ENCODE measurements at regions of chrX and their contacts with region 1.

Region 1: DNA sequence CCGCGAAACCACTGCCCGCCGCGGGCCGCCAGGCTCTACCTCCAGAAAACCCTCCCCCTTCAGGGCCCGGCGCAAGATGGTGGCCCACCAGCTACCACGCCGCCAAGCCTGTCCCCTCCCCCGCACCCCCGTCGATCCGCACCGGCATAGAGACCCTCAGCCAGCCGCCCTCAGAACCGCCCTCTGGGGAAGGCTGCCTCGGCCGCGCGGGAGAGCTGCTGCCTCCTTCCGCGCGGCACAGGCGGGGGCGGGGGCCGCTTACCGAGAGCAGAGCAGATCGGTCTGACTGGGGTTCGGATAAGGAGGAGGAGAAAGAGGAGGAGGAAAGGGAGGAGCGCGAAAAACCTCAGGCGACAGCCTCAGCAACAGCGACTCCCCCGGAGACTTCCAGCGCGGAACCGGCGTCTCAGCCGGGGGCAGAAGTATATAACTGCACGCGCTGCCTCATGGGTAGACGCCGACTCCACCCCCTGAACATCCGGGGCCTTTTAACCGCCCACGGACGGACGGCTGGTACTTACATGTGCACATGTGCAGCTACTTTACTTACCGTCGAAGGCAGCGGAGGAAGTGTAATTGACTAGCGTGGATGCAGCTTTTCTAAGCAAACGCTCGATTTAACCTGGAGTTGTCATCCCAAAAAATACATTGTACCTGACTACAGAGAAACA is at the start of gene ZNF280C:
- DNase-seq: peak; percentile 85
- H3K4me3 Mint-ChIP-seq: peak within 1 kb of the TSS; percentile 92
- H3K27ac Mint-ChIP-seq: peak within 1 kb of the TSS; percentile 91
- H3K4me1 Mint-ChIP-seq: peaks cover 19% of the 10 kb centered on the region
- H3K27me3 Mint-ChIP-seq: peaks cover 2% of the 10 kb centered on the region
- total RNA-seq, gene ZNF280C: 7.4 and 7.6 TPM in 2 replicates

Region 2: DNA sequence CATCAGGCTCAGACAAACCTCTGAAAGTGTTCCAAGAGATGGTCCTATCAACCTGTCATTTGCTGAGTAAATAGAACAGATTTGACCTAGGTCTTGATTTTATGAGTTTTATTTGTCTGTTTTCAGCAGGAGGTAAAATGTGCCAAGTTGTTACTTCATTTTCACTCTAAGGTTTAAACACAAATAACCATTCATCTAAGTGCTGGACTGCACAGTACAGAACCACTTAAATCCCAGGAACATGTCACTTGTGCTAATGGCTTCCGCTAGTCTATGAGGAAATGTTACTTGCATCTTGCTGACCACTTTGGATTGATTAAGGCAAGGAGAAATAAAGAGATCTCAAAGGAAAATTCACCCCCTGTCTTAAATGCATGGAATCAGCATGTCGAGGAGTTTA is 1406.1 kb before region 1 on chrX:
- intact Hi-C with region 1: no loop called
- DNase-seq: no peak
- H3K4me3 Mint-ChIP-seq: no peak overlapping the region
- H3K27ac Mint-ChIP-seq: no peak overlapping the region
- H3K4me1 Mint-ChIP-seq: no peaks in the 10 kb centered on the region
- H3K27me3 Mint-ChIP-seq: no peaks in the 10 kb centered on the region

Region 3: DNA sequence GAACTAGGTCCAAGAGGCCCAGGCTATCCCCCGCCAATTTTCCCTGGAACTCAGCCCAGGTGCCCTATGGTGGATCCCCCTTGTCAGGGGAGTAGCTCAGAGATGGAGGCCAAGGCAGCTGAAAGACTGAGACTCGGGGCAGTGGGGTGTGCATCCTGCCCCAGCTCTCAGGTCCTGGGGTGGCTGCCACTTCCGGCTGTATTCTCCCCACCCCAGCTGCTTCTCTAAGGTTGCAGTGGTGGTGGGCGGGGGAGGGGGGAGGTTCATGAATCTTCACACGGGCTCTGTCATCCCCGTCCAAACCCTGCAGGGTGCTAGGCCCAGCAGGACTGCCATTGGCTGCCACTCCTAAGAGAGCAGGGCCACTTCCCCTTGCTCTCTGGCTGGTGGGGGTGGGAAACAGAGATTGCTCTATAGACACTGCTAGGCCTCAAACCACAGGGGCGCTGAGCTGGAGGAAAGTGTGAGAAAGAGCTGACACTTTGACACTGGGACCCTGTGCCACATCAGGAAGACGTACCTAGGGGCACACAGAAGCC is 487.4 kb before region 1 on chrX:
- intact Hi-C with region 1: loop called (anchors 5 kb)
- DNase-seq: peak; percentile 65
- H3K4me3 Mint-ChIP-seq: peak overlapping the region; percentile 87
- H3K27ac Mint-ChIP-seq: peak overlapping the region; percentile 91
- H3K4me1 Mint-ChIP-seq: peaks cover 63% of the 10 kb centered on the region
- H3K27me3 Mint-ChIP-seq: no peaks in the 10 kb centered on the region

Region 4: GRCh38 chrX:130165703-130166502 is 102.7 kb before region 1 on chrX and contains the start of gene AIFM1:
- intact Hi-C with region 1: loop called (anchors 2 kb)
- DNase-seq: peak; percentile 86
- H3K4me3 Mint-ChIP-seq: peak within 1 kb of the TSS; percentile 95
- H3K27ac Mint-ChIP-seq: peak within 1 kb of the TSS; percentile 98
- H3K4me1 Mint-ChIP-seq: peaks cover 20% of the 10 kb centered on the region
- H3K27me3 Mint-ChIP-seq: no peaks in the 10 kb centered on the region
- total RNA-seq, gene AIFM1: 46.0 and 50.2 TPM in 2 replicates

Region 5: DNA sequence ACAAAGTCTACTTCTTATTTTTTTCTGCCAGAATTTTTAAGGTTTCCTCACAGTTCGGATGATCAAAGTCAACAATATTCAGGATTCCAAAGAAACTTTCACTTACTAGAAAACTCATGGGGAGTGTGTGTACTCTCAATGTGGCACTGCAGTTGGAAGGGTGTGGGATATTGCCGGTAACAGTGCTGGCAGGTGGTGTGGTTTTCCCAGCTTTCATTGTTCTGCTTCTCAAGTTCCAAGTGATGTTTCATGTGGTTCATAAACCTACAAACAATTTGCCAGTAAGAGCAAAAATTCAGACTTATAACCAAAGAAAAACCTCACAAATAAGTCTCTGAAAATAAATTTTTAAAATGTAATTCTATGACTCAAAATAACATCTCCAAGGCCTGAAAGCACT is 39.8 kb before region 1 on chrX:
- intact Hi-C with region 1: loop called (anchors 5 kb)
- DNase-seq: no peak
- H3K4me3 Mint-ChIP-seq: no peak overlapping the region
- H3K27ac Mint-ChIP-seq: peak overlapping the region; percentile 23
- H3K4me1 Mint-ChIP-seq: no peaks in the 10 kb centered on the region
- H3K27me3 Mint-ChIP-seq: no peaks in the 10 kb centered on the region

Region 6: GRCh38 chrX:130401415-130402207 is 133.0 kb after region 1 on chrX and contains the start of gene RBMX2:
- intact Hi-C with region 1: loop called (anchors 5 kb)
- DNase-seq: peak; percentile 64
- H3K4me3 Mint-ChIP-seq: peak within 1 kb of the TSS; percentile 100
- H3K27ac Mint-ChIP-seq: peak within 1 kb of the TSS; percentile 89
- H3K4me1 Mint-ChIP-seq: no peaks in the 10 kb centered on the region
- H3K27me3 Mint-ChIP-seq: peaks cover 6% of the 10 kb centered on the region
- total RNA-seq, gene RBMX2: 26.0 and 26.3 TPM in 2 replicates

Region 7: GRCh38 chrX:130468395-130468923 is 199.8 kb after region 1 on chrX:
- intact Hi-C with region 1: no loop called
- DNase-seq: no peak
- H3K4me3 Mint-ChIP-seq: no peak overlapping the region
- H3K27ac Mint-ChIP-seq: no peak overlapping the region
- H3K4me1 Mint-ChIP-seq: no peaks in the 10 kb centered on the region
- H3K27me3 Mint-ChIP-seq: peaks cover 2% of the 10 kb centered on the region

Region 8: DNA sequence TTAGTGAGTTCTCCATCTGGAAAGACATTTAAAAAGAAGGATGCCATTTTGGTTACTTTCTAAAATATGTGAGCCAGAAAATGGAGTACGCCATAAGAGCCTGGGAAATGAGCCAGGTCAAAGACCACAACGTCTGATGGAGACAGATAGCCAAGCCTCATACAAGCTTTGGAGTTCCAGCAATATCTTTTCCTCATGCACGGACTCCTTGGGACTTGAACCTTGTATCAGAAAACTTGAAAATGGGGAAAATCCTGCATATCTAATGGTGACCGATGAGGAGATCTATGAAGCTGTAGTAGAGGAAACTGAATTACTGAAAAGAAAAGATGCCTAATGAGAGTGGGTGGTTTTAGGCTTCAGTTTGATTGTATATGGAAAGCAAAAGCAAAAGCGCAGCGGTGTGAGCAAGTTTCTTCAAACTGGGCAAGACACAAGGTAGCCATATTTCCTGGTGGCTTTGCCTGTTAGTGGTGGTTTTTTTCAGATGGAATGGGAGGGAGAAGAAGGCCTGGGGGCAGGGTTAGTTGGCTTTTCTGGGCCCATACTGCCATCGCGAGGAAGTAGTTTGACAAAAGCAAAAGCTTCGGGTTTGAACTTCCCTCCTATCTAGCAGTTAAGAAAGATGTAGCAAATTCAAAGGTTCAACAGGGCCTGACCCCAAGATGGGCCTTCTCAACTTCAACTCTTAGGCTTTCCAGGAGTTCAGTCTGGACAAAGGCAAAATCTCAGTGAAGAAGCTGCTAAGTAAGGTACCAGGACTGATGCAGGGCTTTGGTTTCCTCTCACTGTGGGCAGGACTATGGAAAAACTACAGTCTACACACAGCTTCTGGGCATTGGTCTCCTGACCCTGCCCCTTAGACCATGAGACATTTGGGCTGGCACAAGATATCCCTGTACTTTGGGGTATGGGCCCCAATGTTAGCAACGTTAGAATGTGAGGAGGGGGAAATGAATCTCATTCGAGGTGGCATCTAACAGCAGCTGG is 1544.5 kb after region 1 on chrX:
- intact Hi-C with region 1: loop called (anchors 5 kb)
- DNase-seq: peak; percentile 63
- H3K4me3 Mint-ChIP-seq: peak overlapping the region; percentile 76
- H3K27ac Mint-ChIP-seq: peak overlapping the region; percentile 89
- H3K4me1 Mint-ChIP-seq: peaks cover 36% of the 10 kb centered on the region
- H3K27me3 Mint-ChIP-seq: no peaks in the 10 kb centered on the region